Right cardiac atrium (tissue), 5 donors: ENCODE measurements at regions of chr22 and their contacts with region 1.

Region 1: GRCh38 chr22:49632199-49633009 is 195.3 kb downstream of the BRD1 start:
- DNase-seq: peak; percentile 63 to 88 (median 86)
- ATAC-seq: peak; percentile 77 to 79
- H3K4me3 ChIP-seq: no peak overlapping the region
- H3K27ac ChIP-seq: no peak overlapping the region
- H3K4me1 ChIP-seq: no peaks in the 10 kb centered on the region
- H3K27me3 ChIP-seq: no peaks in the 10 kb centered on the region

Region 2: DNA sequence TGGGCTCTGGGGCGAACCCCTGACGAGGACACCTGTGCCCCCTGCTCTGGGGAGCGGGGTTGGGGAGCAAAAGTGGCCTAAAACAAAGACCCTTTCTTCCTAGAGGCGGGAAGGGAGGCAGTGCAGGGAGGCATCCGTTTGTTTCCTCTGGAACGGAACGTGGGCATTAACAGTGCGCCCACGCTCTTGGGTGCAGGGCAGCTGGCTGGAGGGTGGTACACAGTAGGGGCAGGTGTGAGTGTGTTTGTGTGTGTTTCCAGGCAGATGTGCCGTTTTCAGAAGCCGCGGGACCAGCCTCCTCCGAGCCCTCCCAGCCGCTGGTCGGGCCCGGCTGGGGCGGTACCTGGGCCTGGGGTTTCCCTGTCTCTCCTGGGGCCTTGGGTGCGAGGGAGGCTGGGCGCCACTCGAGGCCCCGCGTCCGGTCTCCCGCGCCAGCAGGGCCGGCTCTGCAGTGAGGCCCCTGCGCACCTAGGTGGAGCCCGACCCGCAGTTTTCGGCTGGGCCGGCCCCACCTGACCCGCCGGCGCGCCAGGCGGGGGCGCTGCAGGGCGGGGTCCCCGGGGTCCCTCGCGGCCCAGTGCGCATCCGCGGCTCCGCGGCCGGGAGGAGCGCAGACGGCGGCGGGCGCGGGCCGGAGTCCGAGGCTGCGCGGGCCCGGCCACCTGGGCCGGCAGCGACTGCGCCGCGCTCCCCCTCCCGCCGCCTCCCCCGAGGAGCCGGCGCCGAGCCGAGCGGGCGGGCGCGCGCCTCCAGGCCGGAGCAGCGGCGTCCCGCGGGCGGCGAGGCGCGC is 1057.4 kb before region 1 on chr22:
- intact Hi-C with region 1: loop called in 1 of 4 experiments (anchors 10 kb)
- DNase-seq: peak; percentile 30 to 67 (median 58)
- ATAC-seq: peak in 1 of 2 donors; percentile 71
- H3K4me3 ChIP-seq: peak overlapping the region; percentile 49
- H3K27ac ChIP-seq: no peak overlapping the region
- H3K4me1 ChIP-seq: no peaks in the 10 kb centered on the region
- H3K27me3 ChIP-seq: no peaks in the 10 kb centered on the region

Region 3: GRCh38 chr22:49404576-49405241 is 227.7 kb before region 1 on chr22:
- intact Hi-C with region 1: no loop called
- DNase-seq: no peak
- ATAC-seq: no peak
- H3K4me3 ChIP-seq: no peak overlapping the region
- H3K27ac ChIP-seq: no peak overlapping the region
- H3K4me1 ChIP-seq: no peaks in the 10 kb centered on the region
- H3K27me3 ChIP-seq: no peaks in the 10 kb centered on the region